Gastrocnemius medialis (tissue), 4 donors: ENCODE measurements at regions of chr15 and their contacts with region 1.

Region 1: DNA sequence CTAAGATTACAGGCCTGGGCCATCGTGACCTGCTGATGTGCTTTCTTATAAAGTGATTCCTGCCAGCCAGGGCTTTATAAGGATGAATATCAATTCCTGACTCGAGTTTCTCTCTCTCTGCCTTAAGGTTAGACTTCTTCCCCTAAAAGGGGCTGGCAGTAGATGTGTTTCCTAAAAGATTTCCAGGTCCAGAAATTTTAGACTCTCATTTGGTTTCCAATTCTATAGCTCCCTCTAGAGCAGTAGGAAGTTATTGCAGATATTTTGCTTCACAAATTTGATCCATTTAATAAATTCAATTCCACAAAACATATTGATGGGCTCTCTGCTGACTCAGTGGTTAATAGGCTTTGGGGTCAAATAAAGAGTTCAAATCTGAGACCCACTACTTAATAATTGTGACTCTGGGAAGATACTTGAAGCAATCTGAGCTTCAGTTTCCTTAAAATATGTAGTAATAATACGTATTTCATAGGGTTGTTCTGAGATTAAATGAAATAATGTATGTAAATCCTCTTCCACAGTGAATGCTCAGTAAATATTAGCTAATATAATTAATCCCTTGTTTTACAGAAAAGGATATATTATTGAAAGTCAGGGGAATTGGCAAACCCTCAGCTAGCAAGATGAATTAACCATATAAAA is 2.1 kb downstream of the TRIM69 start:
- DNase-seq: no peak
- ATAC-seq: peak; percentile 39 to 52
- H3K4me3 ChIP-seq: no peak overlapping the region
- H3K27ac ChIP-seq: no peak overlapping the region
- H3K4me1 ChIP-seq: no peaks in the 10 kb centered on the region
- H3K27me3 ChIP-seq: no peaks in the 10 kb centered on the region
- CTCF ChIP-seq: peak; percentile 46 to 75 (median 69)
- POLR2A ChIP-seq: no peak

Region 2: DNA sequence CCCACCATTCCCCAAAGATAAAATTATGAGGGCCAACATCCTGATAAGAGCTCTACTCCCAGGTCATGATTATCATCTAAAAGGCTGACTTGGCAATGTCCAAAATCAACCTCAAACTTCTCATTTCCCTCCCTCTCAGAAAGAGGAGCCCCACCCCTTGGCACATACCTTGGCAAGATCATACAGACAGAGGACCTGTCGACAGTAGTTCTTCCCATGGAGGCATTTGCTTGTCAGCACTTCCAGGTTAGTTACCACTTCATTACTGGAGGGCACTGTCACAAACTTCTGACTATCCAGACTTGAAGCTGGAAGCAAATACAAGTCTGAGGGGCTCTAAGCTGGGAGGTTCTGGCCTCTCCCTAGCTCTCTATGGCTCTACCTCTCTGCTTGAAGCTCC is 163.7 kb before region 1 on chr15:
- in situ Hi-C with region 1: loop called in 3 of 4 experiments (anchors 25 kb)
- intact Hi-C with region 1: loop called (anchors 5 kb)
- DNase-seq: no peak
- ATAC-seq: no peak
- H3K4me3 ChIP-seq: no peak overlapping the region
- H3K27ac ChIP-seq: no peak overlapping the region
- H3K4me1 ChIP-seq: no peaks in the 10 kb centered on the region
- H3K27me3 ChIP-seq: no peaks in the 10 kb centered on the region
- CTCF ChIP-seq: no peak
- POLR2A ChIP-seq: no peak

Region 3: DNA sequence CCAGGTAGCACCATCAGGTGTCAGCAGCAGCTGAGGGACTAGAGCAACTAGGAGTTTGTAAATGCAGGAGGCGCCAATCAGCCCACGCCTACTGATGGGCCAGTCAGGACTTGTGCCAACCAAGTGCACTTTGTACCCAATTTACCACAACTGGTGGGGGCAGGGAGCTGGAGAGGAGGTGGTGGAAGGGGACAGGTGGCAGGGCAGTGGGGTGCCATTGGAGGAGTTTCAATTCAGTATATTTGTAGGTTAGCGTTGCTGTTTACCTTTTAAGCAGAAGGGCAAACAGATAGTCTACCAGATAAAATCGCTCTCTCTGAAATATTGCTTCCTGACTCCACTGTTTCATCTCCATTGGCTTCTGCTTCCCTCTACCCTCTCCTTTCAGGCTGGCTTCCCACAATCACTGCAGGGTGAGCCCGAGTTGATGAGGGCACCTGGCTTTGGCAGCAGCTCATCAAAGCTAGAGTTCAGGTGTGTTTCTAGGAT is 73.6 kb after region 1 on chr15:
- in situ Hi-C with region 1: no loop called
- intact Hi-C with region 1: no loop called
- DNase-seq: no peak
- ATAC-seq: no peak
- H3K4me3 ChIP-seq: no peak overlapping the region
- H3K27ac ChIP-seq: no peak overlapping the region
- H3K4me1 ChIP-seq: no peaks in the 10 kb centered on the region
- H3K27me3 ChIP-seq: peaks cover 0 to 5% (median 4%) of the 10 kb centered on the region in 3 donors
- CTCF ChIP-seq: no peak
- POLR2A ChIP-seq: no peak